Activated CD4-positive, alpha-beta T cell treated with anti-CD3 and anti-CD28 coated beads for 36 hours (primary cell): ENCODE measurements at regions of chr1 and their contacts with region 1.

Region 1: DNA sequence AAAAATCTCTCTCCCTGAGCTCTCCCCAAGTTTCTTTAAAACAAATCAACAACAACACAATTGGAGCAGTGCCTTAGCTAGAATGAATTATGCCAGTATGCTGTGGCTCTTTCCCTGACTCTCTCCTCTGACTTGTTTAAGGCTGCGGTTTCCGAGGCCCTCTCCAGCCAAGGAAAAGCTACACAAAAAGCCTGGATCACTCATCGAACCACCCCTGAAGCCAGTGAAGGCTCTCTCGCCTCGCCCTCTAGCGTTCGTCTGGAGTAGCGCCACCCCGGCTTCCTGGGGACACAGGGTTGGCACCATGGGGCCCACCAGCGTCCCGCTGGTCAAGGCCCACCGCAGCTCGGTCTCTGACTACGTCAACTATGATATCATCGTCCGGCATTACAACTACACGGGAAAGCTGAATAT is 1.9 kb downstream of the S1PR1 start:
- DNase-seq: peak; percentile 95
- ATAC-seq: peak; percentile 30
- H3K4me3 Mint-ChIP-seq: peak overlapping the region; percentile 89
- H3K27ac Mint-ChIP-seq: peak overlapping the region; percentile 99
- H3K4me1 Mint-ChIP-seq: peaks cover 51% of the 10 kb centered on the region
- H3K27me3 Mint-ChIP-seq: no peaks in the 10 kb centered on the region

Region 2: GRCh38 chr1:100351095-100351891 is 887.4 kb before region 1 on chr1:
- CTCF ChIA-PET with region 1: no interaction called
- POLR2A ChIA-PET with region 1: no interaction called
- intact Hi-C with region 1: loop called in 1 of 2 experiments (anchors 5 kb)
- DNase-seq: peak; percentile 94
- ATAC-seq: peak; percentile 77
- H3K4me3 Mint-ChIP-seq: peak overlapping the region; percentile 97
- H3K27ac Mint-ChIP-seq: peak overlapping the region; percentile 97
- H3K4me1 Mint-ChIP-seq: peaks cover 25% of the 10 kb centered on the region
- H3K27me3 Mint-ChIP-seq: no peaks in the 10 kb centered on the region

Region 3: GRCh38 chr1:100941098-100941527 is 297.6 kb before region 1 on chr1:
- CTCF ChIA-PET with region 1: interaction called, 3 read pairs
- POLR2A ChIA-PET with region 1: no interaction called
- intact Hi-C with region 1: loop called (anchors 1 to 5 kb)
- DNase-seq: peak; percentile 45
- ATAC-seq: peak; percentile 82
- H3K4me3 Mint-ChIP-seq: peak overlapping the region; percentile 67
- H3K27ac Mint-ChIP-seq: peak overlapping the region; percentile 94
- H3K4me1 Mint-ChIP-seq: peaks cover 45% of the 10 kb centered on the region
- H3K27me3 Mint-ChIP-seq: peaks cover 2% of the 10 kb centered on the region

Region 4: GRCh38 chr1:101105877-101106276 is 132.8 kb before region 1 on chr1:
- CTCF ChIA-PET with region 1: no interaction called
- POLR2A ChIA-PET with region 1: no interaction called
- intact Hi-C with region 1: no loop called
- DNase-seq: no peak
- ATAC-seq: no peak
- H3K4me3 Mint-ChIP-seq: no peak overlapping the region
- H3K27ac Mint-ChIP-seq: no peak overlapping the region
- H3K4me1 Mint-ChIP-seq: peaks cover 31% of the 10 kb centered on the region
- H3K27me3 Mint-ChIP-seq: no peaks in the 10 kb centered on the region

Region 5: DNA sequence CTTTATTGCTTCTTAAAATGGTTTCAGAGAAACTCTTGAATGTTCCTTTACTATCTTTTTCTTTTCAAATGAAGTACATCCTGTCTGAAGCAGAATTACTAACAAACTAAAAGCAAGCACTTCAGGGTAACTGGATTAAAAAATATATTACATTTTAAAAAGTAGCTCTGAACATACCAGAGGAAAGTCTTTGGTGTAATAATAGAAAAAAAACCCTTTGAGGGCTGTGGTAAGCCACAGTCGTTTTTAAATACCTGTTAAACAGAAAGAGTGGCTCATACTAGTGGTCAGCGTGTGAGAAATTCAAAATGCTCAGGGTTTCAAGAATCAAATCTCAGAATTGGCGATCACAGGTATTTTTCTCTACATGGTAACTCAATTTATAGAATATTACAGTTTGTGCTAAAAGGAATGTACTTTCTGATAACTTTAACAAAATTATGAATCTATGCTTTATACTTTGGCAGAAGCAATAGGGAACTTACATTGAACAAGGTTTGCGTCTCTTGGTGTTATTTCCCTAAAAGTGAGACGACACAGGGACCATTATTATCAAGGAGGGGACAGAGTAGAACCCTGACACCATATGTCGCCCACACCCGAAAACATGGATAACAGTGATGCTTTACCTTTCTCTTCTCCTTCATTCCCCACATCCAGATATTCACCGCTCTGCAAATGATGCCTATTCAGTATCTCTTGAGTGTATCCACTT is 116.1 kb before region 1 on chr1:
- CTCF ChIA-PET with region 1: interaction called, 5 read pairs
- POLR2A ChIA-PET with region 1: no interaction called
- intact Hi-C with region 1: loop called in 1 of 2 experiments (anchors 2 kb)
- DNase-seq: peak; percentile 29
- ATAC-seq: peak; percentile 72
- H3K4me3 Mint-ChIP-seq: peak overlapping the region; percentile 19
- H3K27ac Mint-ChIP-seq: peak overlapping the region; percentile 30
- H3K4me1 Mint-ChIP-seq: peaks cover 49% of the 10 kb centered on the region
- H3K27me3 Mint-ChIP-seq: no peaks in the 10 kb centered on the region

Region 6: DNA sequence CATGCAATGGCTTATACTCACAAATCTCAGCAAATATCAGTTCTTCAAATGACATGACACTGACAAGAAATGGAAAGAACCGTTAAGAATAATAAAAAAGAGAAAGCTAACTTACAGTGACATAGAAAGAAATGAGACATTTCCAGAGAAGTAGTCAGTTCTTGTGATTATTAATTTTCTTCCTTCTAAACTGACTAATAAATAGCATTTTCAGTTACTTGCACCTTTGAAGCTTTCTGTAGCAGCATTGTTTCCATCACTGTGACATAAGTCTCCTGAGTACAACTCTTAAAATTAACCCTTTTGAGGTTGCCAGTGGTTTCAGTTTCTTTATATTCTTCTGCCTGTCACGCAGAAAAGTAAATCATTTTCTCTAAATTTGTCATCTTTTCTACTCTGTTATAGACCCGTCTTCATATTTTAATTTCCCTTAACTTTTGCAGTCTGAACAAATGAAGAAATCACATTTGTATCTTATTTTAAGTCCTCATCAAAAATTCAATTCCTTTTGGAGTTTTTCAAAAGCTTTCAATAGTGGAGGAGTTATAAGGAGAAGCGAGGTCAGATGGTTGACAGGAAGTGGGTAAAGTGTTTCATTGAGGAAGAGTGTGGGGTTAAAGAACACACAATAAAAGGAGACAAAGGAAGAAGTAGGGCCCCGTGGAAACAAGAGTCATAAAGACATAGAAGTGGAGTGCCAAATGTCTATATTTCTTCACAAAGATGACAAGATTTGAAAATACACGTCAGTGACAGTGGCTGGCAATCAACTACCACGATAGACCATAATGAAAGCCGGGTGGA is 59.8 kb before region 1 on chr1:
- CTCF ChIA-PET with region 1: interaction called, 19 read pairs
- POLR2A ChIA-PET with region 1: interaction called, 36 read pairs
- intact Hi-C with region 1: loop called (anchors 1 kb)
- DNase-seq: peak; percentile 65
- ATAC-seq: peak; percentile 69
- H3K4me3 Mint-ChIP-seq: peak overlapping the region; percentile 71
- H3K27ac Mint-ChIP-seq: peak overlapping the region; percentile 99
- H3K4me1 Mint-ChIP-seq: peaks cover 87% of the 10 kb centered on the region
- H3K27me3 Mint-ChIP-seq: no peaks in the 10 kb centered on the region

Region 7: DNA sequence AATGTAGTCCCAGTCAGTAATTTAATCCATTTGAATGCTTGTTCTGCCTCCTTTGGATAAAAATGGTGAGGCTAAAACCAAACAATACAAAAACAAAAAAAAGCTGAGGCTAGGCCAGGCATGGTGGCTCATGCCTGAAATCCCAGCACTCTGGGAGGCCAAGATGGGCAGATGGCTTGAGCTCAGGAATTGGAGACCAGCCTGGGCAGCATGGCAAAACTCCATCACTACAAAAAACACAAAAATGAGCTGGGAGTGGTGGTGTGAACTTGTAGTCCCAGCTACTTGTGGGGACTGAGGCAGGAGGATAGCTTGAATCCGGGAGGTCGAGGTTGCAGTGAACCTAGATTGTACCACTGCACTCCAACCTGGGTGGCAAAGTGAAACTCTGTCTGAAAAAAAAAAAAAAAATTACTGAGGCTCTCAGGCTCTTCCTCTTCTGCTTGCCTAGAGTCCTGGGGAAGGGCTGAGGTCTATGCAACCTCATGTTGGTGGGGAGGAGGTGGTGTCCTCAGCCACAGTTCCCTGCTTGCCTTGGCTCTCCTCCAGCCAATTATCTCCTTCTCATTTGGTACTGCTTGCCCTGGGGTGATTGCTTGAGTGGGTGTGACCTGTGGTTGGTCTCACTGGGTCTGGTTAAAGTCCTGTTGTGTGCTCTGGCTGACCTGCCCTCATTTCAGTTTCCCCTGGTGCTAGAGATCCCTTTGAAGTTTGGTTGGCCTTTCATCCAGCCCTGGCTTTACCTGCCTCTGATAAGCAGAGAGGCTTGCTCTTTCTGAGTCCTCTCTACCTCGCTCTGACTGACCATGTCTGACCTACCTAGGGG is 19.0 kb after region 1 on chr1:
- CTCF ChIA-PET with region 1: interaction called, 43 read pairs
- POLR2A ChIA-PET with region 1: interaction called, 10 read pairs
- intact Hi-C with region 1: loop called (anchors 2 kb)
- DNase-seq: peak; percentile 38
- ATAC-seq: peak; percentile 6
- H3K4me3 Mint-ChIP-seq: no peak overlapping the region
- H3K27ac Mint-ChIP-seq: peak overlapping the region; percentile 39
- H3K4me1 Mint-ChIP-seq: peaks cover 71% of the 10 kb centered on the region
- H3K27me3 Mint-ChIP-seq: no peaks in the 10 kb centered on the region

Region 8: GRCh38 chr1:101325144-101325543 is 86.5 kb after region 1 on chr1:
- CTCF ChIA-PET with region 1: no interaction called
- POLR2A ChIA-PET with region 1: no interaction called
- intact Hi-C with region 1: no loop called
- DNase-seq: no peak
- ATAC-seq: no peak
- H3K4me3 Mint-ChIP-seq: no peak overlapping the region
- H3K27ac Mint-ChIP-seq: no peak overlapping the region
- H3K4me1 Mint-ChIP-seq: no peaks in the 10 kb centered on the region
- H3K27me3 Mint-ChIP-seq: peaks cover 2% of the 10 kb centered on the region